Activated CD4-positive, alpha-beta T cell treated with anti-CD3 and anti-CD28 coated beads, Interleukin-2, amount 10 ng/mL, durations not matched to agents 7 days and 5 days (primary cell): ENCODE measurements at regions of chr10 and their contacts with region 1.

Region 1: DNA sequence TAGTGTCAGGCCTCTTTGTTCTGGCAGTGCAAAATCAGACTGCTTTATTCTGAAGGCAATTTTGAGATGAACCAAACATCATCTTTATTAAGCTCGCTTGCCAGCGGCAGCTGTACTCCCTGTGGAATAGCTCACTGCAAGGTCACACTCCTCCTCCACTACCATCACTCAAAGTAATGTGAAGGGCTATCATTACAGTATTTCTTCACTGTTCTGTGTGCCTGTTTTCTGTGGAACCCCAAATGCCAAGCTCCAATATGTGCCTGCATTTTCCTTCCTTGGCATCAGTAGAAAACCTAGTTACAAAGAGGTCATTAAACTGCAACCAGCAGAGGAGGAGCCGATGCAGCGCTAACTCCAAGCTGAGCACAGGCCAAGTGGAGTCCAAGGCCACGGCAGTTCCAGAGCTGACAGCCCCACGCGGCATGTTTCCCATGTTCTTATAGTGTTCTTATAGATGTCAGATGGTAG is 21.4 kb downstream of the BCCIP start:
- DNase-seq: no peak
- H3K4me3 Mint-ChIP-seq: no peak overlapping the region
- H3K27ac Mint-ChIP-seq: no peak overlapping the region
- H3K4me1 Mint-ChIP-seq: no peaks in the 10 kb centered on the region
- H3K27me3 Mint-ChIP-seq: no peaks in the 10 kb centered on the region

Region 2: DNA sequence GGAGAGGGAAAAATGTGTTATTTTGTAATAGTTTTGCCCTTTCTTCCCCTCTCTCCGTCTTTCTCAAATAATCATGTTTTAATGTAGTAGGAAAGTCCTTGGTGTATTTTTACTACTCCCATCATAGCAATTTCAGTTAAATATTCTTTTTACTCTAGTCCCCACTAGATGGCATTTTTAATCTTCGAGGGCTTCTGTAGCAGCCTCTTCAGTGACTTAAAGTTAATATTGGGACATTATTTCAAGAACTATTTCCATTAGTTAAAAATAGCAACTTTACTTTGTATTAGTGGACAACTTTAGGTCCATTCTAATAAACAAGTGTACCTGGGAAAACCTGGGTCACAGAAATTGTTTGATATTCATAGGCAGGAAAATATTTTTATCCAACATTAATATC is 102.3 kb before region 1 on chr10:
- CTCF ChIA-PET with region 1: no interaction called
- POLR2A ChIA-PET with region 1: no interaction called
- DNase-seq: no peak
- H3K4me3 Mint-ChIP-seq: no peak overlapping the region
- H3K27ac Mint-ChIP-seq: no peak overlapping the region
- H3K4me1 Mint-ChIP-seq: peaks cover 9% of the 10 kb centered on the region
- H3K27me3 Mint-ChIP-seq: no peaks in the 10 kb centered on the region

Region 3: DNA sequence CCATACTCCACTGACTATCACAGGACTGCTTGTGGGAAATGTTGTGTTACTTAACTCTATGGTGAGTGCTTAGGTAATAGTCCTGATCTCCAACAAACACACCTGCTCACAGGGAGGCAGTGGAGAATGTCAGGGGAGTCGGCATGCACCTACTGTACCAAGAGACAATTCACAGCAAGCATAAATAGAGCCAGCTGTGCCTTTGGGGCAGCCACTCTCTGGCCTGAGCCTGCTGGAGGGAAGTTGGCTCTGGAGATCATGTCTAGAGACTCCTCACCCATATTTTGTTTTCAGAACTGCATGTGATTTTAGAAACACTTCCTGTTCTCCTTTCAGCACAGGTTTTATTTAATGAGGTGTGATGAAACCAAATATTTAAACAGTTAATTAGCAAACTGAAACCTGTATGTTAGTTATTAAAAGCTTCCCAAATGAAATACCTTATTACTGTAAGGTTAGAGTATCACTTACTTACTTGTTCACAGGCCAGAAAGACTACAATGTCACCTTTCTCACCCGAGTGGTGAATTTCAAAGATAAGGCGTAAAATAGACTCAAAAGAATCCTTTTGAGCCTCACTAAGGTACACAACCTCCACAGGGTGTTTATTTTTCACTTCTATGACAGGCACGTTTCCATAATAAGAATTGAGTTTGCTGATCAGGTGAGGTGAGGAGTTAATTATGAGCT is 14.5 kb after region 1 on chr10:
- CTCF ChIA-PET with region 1: interaction called, 5 read pairs
- POLR2A ChIA-PET with region 1: interaction called, 12 read pairs
- DNase-seq: no peak
- H3K4me3 Mint-ChIP-seq: no peak overlapping the region
- H3K27ac Mint-ChIP-seq: no peak overlapping the region
- H3K4me1 Mint-ChIP-seq: no peaks in the 10 kb centered on the region
- H3K27me3 Mint-ChIP-seq: no peaks in the 10 kb centered on the region